Cardiac septum (tissue), 1 donor: ENCODE measurements at regions of chr10 and their contacts with region 1.

Region 1: GRCh38 chr10:125060826-125061556 is 99.4 kb downstream of the CTBP2 start:
- DNase-seq: peak; percentile 92

Region 2: GRCh38 chr10:124999433-125000365 is 61.3 kb before region 1 on chr10:
- intact Hi-C with region 1: loop called (anchors 2 kb)
- DNase-seq: peak; percentile 74

Region 3: DNA sequence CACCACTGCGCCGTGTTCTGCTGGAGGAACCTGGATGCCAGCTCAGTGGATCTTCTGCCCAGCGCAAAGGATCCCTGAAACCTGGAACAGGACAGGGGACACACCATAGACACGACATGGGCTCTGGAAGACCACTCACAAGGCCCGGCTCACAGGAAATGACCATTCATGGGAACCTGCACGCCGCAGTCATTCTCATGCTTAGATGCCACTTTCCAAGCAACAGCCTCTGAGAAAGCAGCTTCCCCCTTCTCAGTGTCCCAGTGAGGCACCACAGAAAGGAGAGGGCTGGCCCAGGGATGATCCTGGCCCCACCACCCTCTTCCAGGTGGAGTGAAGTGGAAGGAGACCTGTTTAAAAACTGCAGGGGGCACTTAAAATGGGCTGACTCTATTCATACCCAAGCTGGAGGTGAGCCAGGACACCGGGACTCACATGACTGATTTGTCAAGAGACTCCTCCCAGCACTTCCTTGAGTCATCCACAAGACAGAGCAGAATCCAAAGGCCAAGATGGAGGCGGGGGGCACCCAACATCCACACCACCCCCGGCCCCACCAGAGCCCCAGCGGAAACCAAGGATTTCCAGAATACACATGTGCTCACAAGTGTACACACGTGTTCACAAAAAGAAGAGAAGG is 88.2 kb after region 1 on chr10:
- intact Hi-C with region 1: no loop called
- DNase-seq: no peak

Region 4: DNA sequence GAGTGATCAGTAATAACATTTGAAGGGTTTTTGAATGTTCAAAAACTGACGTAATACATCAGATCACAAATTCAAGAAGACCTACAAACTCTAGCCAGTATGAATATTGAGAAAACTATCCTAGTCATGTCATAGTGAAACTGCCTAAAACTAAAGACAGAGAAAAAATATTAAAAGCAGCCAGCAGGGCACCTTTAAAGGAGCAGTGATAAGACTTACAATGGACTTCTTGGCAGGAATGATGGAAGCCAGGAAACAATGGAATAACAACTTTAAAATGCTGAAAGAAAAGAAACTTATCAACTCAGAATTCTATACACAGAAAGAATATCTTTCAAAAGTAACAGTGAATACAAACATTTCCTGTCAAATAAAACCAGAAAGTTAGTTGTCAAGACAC is 177.7 kb after region 1 on chr10:
- intact Hi-C with region 1: no loop called
- DNase-seq: no peak